ENCODE measurements at regions of chr22 and their contacts with region 1.

Region 1: GRCh38 chr22:45638834-45639746 is 32.5 kb upstream of the ATXN10 start:
- DNase-seq: peak; percentile 82 to 85 (median 83)
- ATAC-seq: peak; percentile 75 to 91
- H3K4me3 ChIP-seq: no peak overlapping the region
- H3K27ac ChIP-seq: no peak overlapping the region
- H3K4me1 ChIP-seq: no peaks in the 10 kb centered on the region
- H3K27me3 ChIP-seq: no peaks in the 10 kb centered on the region

Region 2: DNA sequence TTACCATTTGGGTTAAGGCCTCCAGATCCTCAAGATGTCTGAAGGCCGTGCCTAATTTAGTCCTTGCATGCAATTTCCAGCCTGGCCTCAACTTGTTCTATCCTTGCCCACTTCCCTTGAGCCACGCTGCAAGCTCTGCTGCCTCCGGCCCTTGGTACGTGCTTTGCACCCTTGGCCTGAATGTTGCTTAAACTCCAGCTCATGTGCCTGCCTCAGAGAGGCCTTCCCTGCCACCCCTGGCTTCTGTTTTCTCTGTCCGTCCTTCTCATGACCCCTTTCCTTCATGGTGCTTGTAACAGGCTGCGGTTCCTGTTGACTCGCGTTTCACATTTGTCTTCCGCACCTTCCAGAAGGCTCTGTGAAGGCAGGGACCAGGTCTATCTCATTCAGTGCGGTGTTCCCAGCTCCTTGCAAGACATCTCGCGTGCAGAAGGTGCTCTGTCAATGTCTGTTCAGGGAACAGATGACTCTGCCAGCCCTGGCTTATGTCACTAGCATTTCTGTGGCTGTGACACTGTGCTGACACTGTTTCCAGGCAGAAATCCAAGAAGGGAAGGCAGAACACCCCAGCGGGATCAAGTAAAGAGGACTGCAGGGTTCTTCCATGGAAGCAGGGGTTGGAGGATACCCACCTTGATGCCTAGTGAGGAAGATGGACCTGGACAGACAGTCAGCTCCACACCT is 74.6 kb before region 1 on chr22:
- intact Hi-C with region 1: no loop called
- DNase-seq: peak in 1 of 3 donors; percentile 37
- ATAC-seq: peak; percentile 65 to 66
- H3K4me3 ChIP-seq: no peak overlapping the region
- H3K27ac ChIP-seq: peak overlapping the region; percentile 32
- H3K4me1 ChIP-seq: no peaks in the 10 kb centered on the region
- H3K27me3 ChIP-seq: no peaks in the 10 kb centered on the region

Region 3: GRCh38 chr22:45584121-45584570 is 54.9 kb before region 1 on chr22:
- intact Hi-C with region 1: loop called in 1 of 4 experiments (anchors 5 kb)
- DNase-seq: peak in 2 of 3 donors; percentile 14
- ATAC-seq: no peak
- H3K4me3 ChIP-seq: no peak overlapping the region
- H3K27ac ChIP-seq: no peak overlapping the region
- H3K4me1 ChIP-seq: no peaks in the 10 kb centered on the region
- H3K27me3 ChIP-seq: no peaks in the 10 kb centered on the region

Region 4: GRCh38 chr22:45594123-45594941 is 44.8 kb before region 1 on chr22:
- intact Hi-C with region 1: loop called in 1 of 4 experiments (anchors 5 kb)
- DNase-seq: peak in 1 of 3 donors; percentile 17
- ATAC-seq: no peak
- H3K4me3 ChIP-seq: no peak overlapping the region
- H3K27ac ChIP-seq: no peak overlapping the region
- H3K4me1 ChIP-seq: no peaks in the 10 kb centered on the region
- H3K27me3 ChIP-seq: no peaks in the 10 kb centered on the region

Region 5: DNA sequence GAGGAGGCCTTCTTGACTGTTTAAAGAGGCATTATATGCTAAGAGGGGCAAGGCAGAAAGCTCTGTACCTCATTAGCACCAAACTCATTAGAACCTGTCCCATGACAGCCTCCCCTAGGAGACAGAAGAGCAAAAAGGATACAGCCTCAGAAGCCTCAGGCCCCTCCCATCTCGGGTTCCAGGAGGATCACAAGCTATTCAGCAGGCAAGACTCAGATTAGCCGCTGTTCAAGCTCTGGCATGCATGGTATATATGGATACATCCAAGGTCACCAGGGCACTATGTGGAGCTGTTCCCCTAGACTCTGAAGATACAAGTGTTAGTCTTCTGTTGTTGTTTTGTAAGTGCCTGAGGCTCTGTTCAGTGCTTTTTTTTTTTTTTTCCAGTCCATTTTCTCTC is 64.7 kb after region 1 on chr22:
- intact Hi-C with region 1: no loop called
- DNase-seq: no peak
- ATAC-seq: no peak
- H3K4me3 ChIP-seq: no peak overlapping the region
- H3K27ac ChIP-seq: no peak overlapping the region
- H3K4me1 ChIP-seq: peaks cover 1% of the 10 kb centered on the region
- H3K27me3 ChIP-seq: no peaks in the 10 kb centered on the region